Esophagus muscularis mucosa (tissue), 4 donors: ENCODE measurements at regions of chr18 and their contacts with region 1.

Region 1: DNA sequence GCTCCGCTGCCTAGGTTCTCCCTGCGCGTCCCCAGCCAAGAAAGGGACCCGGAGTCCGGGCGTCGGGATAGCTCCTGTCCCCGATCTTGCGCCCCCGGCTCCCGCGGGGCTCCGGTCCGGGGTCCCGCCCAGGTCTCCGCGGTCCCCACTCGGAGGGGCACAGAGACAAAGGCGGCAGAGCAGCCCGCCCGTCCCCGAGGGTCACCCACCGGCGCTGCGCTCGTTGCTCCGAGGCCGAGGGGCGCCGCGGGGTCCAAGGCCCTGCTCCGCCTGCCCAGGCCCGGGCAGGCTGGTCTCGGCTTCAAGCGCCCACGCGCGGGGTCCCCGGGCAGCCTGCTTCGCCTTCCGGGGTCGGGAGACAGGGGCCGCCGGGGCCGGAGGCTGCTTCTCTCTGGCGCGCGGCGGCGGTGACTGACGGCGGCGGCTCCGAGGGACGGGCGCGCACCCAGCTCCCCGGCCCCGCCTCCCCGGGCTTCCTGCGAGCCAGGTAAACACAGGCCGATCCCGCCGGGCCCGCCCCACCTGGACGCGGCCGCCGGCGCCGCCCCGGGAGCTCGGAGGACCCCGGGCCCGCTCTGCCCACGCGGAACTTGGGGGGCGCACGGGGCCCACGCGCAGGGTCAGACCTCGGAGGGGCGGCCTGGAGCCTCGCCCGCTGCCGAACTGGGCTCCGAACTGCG is at the start of gene MBP:
- DNase-seq: no peak
- H3K4me3 ChIP-seq: peak within 1 kb of the TSS; percentile 69 to 84 (median 76)
- H3K27ac ChIP-seq: peak within 1 kb of the TSS; percentile 86 to 92 (median 90)
- H3K4me1 ChIP-seq: peaks cover 29 to 72% (median 67%) of the 10 kb centered on the region in 4 donors
- H3K27me3 ChIP-seq: peaks cover 0 to 41% (median 3%) of the 10 kb centered on the region in 4 donors
- CTCF ChIP-seq: no peak
- EP300 ChIP-seq: no peak
- POLR2A ChIP-seq: peak; percentile 74
- total RNA-seq, gene MBP: 21.9 to 31.3 (median 27.3) TPM

Region 2: DNA sequence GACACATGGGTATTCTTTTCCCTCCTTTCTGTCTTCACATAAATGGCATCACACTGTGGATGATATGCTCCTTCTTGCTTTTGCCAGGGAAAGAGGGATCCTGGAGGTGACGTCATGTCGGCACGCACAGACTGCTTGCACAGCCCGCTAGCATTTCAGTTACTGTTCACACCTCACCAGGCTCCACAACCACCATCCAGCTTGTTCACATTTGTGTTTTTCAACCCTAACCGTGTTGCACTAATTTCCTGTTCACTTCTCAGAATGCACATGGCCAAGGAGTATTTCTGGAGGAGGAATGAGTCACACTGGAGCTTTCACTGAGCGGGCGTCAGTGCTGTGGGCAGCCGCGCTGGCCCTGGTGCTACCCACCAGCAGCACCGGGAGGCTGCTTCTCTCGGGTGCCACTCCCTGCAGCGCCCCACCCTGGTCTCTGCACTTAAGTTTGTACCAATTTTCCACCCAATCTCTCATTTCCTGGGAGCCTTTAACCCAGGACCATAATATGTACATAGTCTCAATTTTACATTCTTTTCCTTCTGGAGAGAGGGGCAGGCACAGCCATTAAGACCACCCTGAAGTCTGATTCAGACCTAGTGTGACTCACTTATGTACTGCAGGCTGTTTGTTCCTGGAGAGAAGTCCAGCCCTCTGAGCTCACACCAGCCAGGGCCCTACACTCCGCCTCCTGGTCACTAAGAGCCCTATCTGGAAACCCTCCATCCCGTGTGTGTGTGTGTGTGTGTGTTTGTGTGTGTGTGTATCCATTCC is 65.0 kb before region 1 on chr18:
- intact Hi-C with region 1: loop called (anchors 5 kb)
- DNase-seq: no peak
- H3K4me3 ChIP-seq: peak overlapping the region in 1 of 4 donors; percentile 13
- H3K27ac ChIP-seq: peak overlapping the region; percentile 63 to 80 (median 69)
- H3K4me1 ChIP-seq: peaks cover 45 to 63% (median 57%) of the 10 kb centered on the region in 4 donors
- H3K27me3 ChIP-seq: no peaks in the 10 kb centered on the region
- CTCF ChIP-seq: no peak
- EP300 ChIP-seq: no peak
- POLR2A ChIP-seq: no peak

Region 3: GRCh38 chr18:77087393-77088141 is 44.9 kb before region 1 on chr18:
- intact Hi-C with region 1: loop called (anchors 5 kb)
- DNase-seq: no peak
- H3K4me3 ChIP-seq: peak overlapping the region; percentile 47 to 52 (median 50)
- H3K27ac ChIP-seq: peak overlapping the region; percentile 78 to 83 (median 80)
- H3K4me1 ChIP-seq: peaks cover 35 to 55% (median 49%) of the 10 kb centered on the region in 4 donors
- H3K27me3 ChIP-seq: no peaks in the 10 kb centered on the region
- CTCF ChIP-seq: no peak
- EP300 ChIP-seq: no peak
- POLR2A ChIP-seq: no peak

Region 4: GRCh38 chr18:77177009-77177408 is 44.5 kb after region 1 on chr18:
- intact Hi-C with region 1: no loop called
- DNase-seq: no peak
- H3K4me3 ChIP-seq: no peak overlapping the region
- H3K27ac ChIP-seq: no peak overlapping the region
- H3K4me1 ChIP-seq: no peaks in the 10 kb centered on the region
- H3K27me3 ChIP-seq: no peaks in the 10 kb centered on the region
- CTCF ChIP-seq: no peak
- EP300 ChIP-seq: no peak
- POLR2A ChIP-seq: no peak